Common myeloid progenitor, CD34-positive (primary cell): ENCODE measurements at regions of chr4 and their contacts with region 1.

Region 1: GRCh38 chr4:40976343-40976742 is 226.6 kb downstream of the NSUN7 start:
- DNase-seq: peak; percentile 52 to 80 (median 73)
- H3K4me3 ChIP-seq: no peak overlapping the region
- H3K27ac ChIP-seq: no peak overlapping the region
- H3K4me1 ChIP-seq: no peaks in the 10 kb centered on the region
- H3K27me3 ChIP-seq: no peaks in the 10 kb centered on the region

Region 2: GRCh38 chr4:41039317-41039716 is 63.0 kb after region 1 on chr4:
- CTCF ChIA-PET with region 1: no interaction called
- POLR2A ChIA-PET with region 1: no interaction called
- DNase-seq: no peak
- H3K4me3 ChIP-seq: no peak overlapping the region
- H3K27ac ChIP-seq: no peak overlapping the region
- H3K4me1 ChIP-seq: no peaks in the 10 kb centered on the region
- H3K27me3 ChIP-seq: no peaks in the 10 kb centered on the region

Region 3: DNA sequence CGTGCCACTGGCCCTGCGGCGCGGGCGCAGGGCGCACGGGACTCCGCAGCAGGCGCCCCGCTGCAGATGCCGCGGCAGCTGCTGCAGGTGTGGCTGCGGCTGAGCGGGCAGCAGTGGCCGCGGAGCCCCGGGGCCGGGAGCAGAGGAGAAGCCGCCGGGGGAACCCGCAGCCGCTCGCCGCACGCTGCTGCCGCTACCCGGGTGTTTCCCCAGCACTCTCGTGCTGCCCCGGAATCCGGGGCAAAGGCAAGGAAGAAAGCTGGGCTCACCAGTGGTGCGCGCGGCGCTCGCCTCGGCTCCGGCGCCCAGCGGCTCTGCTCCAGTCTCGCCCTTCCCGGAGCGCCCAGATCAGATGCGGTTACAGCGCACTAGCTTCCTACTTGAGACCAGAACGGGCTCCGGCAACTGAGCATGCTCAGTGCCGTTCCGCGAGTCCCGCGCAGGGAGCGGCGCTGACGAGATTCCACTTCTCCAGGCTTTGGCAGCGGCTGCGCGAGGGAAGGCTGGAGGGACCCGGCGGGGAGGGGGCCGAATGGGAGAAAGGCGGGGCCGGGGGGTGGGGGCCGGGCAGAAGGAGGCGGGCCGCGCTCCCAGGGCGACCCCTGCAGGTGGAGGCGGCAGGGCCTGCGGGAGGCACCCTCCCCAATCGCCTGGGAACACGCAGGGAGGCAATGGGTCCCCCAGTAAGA is 237.9 kb after region 1 on chr4 and contains the start of gene APBB2:
- CTCF ChIA-PET with region 1: interaction called, 35 read pairs
- POLR2A ChIA-PET with region 1: no interaction called
- DNase-seq: peak; percentile 72 to 94 (median 93)
- H3K4me3 ChIP-seq: peak within 1 kb of the TSS; percentile 61 to 85 (median 73)
- H3K27ac ChIP-seq: no peak within 1 kb of the TSS
- H3K4me1 ChIP-seq: peaks cover 0 to 37% (median 24%) of the 10 kb centered on the region in 4 experiments
- H3K27me3 ChIP-seq: peaks cover 8 to 62% (median 15%) of the 10 kb centered on the region in 5 experiments

Region 4: GRCh38 chr4:41538017-41538733 is 561.8 kb after region 1 on chr4 and contains the start of gene LIMCH1:
- CTCF ChIA-PET with region 1: no interaction called
- POLR2A ChIA-PET with region 1: no interaction called
- DNase-seq: peak; percentile 65 to 80 (median 74)
- H3K4me3 ChIP-seq: peak within 1 kb of the TSS in 3 of 7 experiments; percentile 27 to 64 (median 30)
- H3K27ac ChIP-seq: no peak within 1 kb of the TSS
- H3K4me1 ChIP-seq: peaks cover 0 to 23% (median 2%) of the 10 kb centered on the region in 4 experiments
- H3K27me3 ChIP-seq: no peaks in the 10 kb centered on the region